Activated B cell treated with CpG ODN at 0.5 μM for 24 hours (primary cell): ENCODE measurements at regions of chr1 and their contacts with region 1.

Region 1: DNA sequence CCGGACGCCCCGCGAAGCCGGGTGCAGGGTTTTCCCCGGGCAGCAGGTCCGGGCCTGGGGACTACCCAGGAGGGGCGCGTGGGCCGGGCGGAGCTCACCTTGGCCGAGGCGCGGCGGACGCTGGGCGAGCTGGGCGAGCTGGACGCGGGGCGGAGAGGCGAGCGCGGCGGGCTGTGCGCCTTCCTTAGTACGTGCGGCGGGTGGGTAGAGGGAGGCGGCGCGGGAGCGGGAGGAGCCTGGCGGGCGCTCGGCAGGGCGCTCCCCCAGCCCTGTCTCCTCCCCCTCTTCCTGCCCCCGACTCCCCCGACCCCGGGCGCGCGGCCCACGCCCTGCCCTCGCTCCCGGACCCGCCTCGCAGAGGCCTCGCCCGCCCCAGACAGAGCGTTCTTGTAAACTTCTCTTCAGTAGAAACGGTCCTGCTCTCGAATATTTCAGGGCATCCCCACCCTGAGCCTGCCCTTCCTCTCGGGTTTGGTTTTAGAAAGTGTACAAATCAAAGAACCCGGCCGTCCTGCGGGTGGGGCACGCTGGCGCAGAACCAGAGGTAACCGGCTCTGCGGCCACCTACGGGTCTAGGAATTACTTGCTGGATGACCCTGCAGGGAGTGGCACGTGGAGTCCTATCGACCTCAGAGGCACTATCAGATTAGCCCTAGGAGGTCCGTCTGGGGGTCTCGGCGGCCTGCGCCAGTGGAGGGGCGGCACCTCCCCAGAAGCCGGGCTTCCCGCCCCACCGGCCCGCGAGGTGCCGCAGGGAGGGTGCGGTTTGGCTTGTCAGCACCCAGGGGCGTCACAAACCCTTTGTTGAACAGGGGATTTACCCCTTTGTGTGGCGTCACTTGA is at the start of gene S100A10:
- DNase-seq: peak; percentile 62
- ATAC-seq: peak; percentile 83
- H3K4me3 Mint-ChIP-seq: peak within 1 kb of the TSS; percentile 93
- H3K27ac Mint-ChIP-seq: peak within 1 kb of the TSS; percentile 83
- H3K4me1 Mint-ChIP-seq: peaks cover 26% of the 10 kb centered on the region
- H3K27me3 Mint-ChIP-seq: no peaks in the 10 kb centered on the region
- CTCF ChIP-seq: no peak
- total RNA-seq, gene S100A10: 62.7 and 63.6 TPM in 2 replicates

Region 2: DNA sequence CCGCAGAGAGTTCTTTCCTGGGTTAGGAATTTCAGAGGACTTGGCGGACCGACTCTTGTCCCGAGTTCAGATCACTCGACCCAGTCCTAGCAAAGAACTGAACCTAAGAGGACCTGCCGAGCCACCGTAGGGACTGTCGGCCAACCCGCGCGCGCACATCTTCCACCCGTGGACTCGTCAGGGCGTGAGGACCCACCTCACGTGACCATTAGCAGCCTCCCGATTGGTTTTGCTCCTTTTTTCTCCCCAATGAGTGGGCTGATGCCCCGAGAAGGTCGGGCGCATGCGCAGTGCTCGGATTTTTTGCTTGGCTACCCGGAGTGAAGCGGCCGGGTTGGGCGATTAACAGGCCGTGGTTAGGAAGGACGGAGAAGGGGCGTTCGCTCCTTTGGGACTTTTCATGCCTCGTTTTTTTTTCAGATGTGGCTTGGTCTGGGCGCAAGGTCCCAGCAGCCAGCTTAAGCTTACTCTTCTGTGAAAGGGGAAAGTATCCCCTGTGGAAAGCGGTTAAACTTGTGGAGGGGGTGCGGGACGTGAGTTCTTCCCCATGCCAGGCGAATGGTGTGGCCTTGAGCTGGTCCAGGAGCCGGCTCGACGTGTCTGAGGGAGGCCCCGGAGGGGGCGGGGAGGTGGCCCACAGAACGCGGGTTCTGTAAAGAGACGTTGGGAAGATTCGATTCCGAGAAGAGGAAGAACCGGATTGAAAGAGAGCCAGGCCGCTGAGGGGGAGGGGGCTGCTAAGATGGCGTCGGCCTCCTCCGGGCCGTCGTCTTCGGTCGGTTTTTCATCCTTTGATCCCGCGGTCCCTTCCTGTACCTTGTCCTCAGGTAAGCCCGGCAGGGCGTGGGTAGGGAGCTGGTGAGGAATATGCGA is 795.4 kb before region 1 on chr1 and contains the start of gene PIP5K1A:
- CTCF ChIA-PET with region 1: no interaction called
- POLR2A ChIA-PET with region 1: no interaction called
- intact Hi-C with region 1: loop called (anchors 10 kb)
- DNase-seq: peak; percentile 94
- ATAC-seq: peak; percentile 93
- H3K4me3 Mint-ChIP-seq: peak within 1 kb of the TSS; percentile 99
- H3K27ac Mint-ChIP-seq: peak within 1 kb of the TSS; percentile 98
- H3K4me1 Mint-ChIP-seq: peaks cover 47% of the 10 kb centered on the region
- H3K27me3 Mint-ChIP-seq: no peaks in the 10 kb centered on the region
- CTCF ChIP-seq: no peak
- total RNA-seq, gene PIP5K1A: 63.2 and 77.7 TPM in 2 replicates

Region 3: DNA sequence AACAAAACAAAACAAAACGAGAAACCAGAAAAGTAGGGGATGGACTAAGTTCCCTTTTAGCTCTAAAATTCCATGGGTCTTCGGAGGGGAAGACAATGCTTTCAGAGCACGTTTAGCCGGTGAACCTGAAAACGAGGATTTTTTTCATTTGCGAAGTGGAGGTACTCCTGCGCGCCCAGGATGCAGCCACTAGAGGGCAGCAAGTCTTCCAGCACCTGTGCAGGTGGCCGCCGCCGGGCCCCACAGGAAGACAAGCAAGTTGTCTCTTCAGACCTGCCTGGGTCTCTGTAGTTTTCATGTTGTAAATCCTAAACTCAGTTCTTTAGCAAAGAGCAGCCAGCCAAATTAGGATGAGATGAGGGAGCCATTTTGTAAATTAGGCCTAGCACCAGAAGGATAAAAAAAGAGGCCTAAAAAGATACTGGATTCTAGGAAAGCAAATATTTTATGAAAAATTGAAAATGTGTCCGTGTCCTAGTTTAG is 399.7 kb before region 1 on chr1:
- CTCF ChIA-PET with region 1: no interaction called
- POLR2A ChIA-PET with region 1: no interaction called
- intact Hi-C with region 1: loop called (anchors 1 kb)
- DNase-seq: peak; percentile 66
- ATAC-seq: peak; percentile 97
- H3K4me3 Mint-ChIP-seq: peak overlapping the region; percentile 69
- H3K27ac Mint-ChIP-seq: peak overlapping the region; percentile 46
- H3K4me1 Mint-ChIP-seq: peaks cover 10% of the 10 kb centered on the region
- H3K27me3 Mint-ChIP-seq: peaks cover 11% of the 10 kb centered on the region
- CTCF ChIP-seq: peak; percentile 45

Region 4: GRCh38 chr1:151839457-151840405 is 154.1 kb before region 1 on chr1 and contains the start of gene C2CD4D:
- CTCF ChIA-PET with region 1: no interaction called
- POLR2A ChIA-PET with region 1: no interaction called
- intact Hi-C with region 1: loop called (anchors 2 kb)
- DNase-seq: peak; percentile 52
- ATAC-seq: peak; percentile 55
- H3K4me3 Mint-ChIP-seq: peak within 1 kb of the TSS; percentile 81
- H3K27ac Mint-ChIP-seq: peak within 1 kb of the TSS; percentile 35
- H3K4me1 Mint-ChIP-seq: peaks cover 52% of the 10 kb centered on the region
- H3K27me3 Mint-ChIP-seq: peaks cover 3% of the 10 kb centered on the region
- CTCF ChIP-seq: no peak
- total RNA-seq, gene C2CD4D: 0.15 TPM in 1 of 2 replicates, not detected in the other

Region 5: GRCh38 chr1:151909150-151910149 is 84.4 kb before region 1 on chr1 and contains the start of gene THEM4:
- CTCF ChIA-PET with region 1: interaction called, 5 read pairs
- POLR2A ChIA-PET with region 1: interaction called, 7 read pairs
- intact Hi-C with region 1: loop called (anchors 1 kb)
- DNase-seq: peak; percentile 93
- ATAC-seq: peak; percentile 99
- H3K4me3 Mint-ChIP-seq: peak within 1 kb of the TSS; percentile 90
- H3K27ac Mint-ChIP-seq: peak within 1 kb of the TSS; percentile 92
- H3K4me1 Mint-ChIP-seq: peaks cover 16% of the 10 kb centered on the region
- H3K27me3 Mint-ChIP-seq: no peaks in the 10 kb centered on the region
- CTCF ChIP-seq: no peak
- total RNA-seq, gene THEM4: 20.4 and 22.8 TPM in 2 replicates

Region 6: GRCh38 chr1:151934048-151934493 is 59.8 kb before region 1 on chr1:
- CTCF ChIA-PET with region 1: interaction called, 147 read pairs
- POLR2A ChIA-PET with region 1: interaction called, 7 read pairs
- intact Hi-C with region 1: loop called (anchors 1 kb)
- DNase-seq: no peak
- ATAC-seq: peak; percentile 90
- H3K4me3 Mint-ChIP-seq: no peak overlapping the region
- H3K27ac Mint-ChIP-seq: no peak overlapping the region
- H3K4me1 Mint-ChIP-seq: peaks cover 2% of the 10 kb centered on the region
- H3K27me3 Mint-ChIP-seq: peaks cover 11% of the 10 kb centered on the region
- CTCF ChIP-seq: peak; percentile 86

Region 7: DNA sequence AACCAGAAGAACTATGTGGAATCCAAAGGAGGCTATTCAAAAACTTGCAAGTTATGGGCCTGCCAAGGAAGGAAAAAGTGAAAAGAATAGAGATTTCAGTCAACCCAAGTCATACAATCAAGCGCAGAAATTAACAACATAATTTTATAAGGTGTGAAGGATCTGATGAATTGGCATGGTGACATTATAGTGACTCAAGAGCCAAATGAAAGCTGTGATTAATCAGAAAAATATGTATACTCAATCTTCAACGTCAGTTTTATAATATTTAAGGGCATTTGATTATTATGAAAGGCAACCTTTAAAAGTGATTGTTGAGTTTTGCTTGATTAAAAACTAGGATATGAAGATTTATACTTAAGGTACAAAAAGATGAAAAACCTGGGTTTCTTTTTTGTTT is 46.7 kb before region 1 on chr1:
- CTCF ChIA-PET with region 1: no interaction called
- POLR2A ChIA-PET with region 1: no interaction called
- intact Hi-C with region 1: no loop called
- DNase-seq: no peak
- ATAC-seq: no peak
- H3K4me3 Mint-ChIP-seq: no peak overlapping the region
- H3K27ac Mint-ChIP-seq: no peak overlapping the region
- H3K4me1 Mint-ChIP-seq: peaks cover 35% of the 10 kb centered on the region
- H3K27me3 Mint-ChIP-seq: no peaks in the 10 kb centered on the region
- CTCF ChIP-seq: no peak